PC-9 (cell line): ENCODE measurements at regions of chr9 and their contacts with region 1.

Region 1: DNA sequence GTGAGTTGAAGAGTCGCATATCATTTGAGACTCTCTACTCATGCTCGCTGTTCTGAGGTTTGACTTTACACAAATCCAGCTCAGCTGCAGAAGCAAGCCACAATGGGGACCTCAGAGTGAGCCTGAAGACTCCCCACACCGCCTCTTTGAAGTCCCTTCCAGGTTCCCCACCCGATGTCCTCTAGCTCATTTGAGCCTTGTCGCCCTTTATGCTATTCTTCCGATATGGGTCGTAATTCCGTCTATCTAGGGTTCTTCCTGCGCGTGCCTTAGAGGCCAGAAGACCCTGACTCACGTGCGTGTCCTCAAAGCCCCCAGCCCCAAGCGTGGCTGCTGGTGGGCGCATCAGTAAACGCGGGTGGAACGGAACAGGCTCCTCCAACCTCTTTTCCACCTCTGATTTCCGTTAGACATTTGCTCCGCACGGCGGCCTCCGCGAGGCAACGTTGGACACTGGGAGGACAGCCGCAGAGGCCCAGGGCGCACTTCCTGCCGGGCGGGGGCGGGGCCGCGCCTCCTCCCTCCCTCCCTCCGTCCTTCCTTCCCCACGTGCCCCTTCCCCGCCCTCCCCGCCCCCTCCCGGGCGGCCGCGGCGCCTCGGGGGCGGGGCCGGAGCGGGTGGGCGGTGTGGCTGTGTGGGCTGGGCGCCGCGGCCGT is at the start of gene SNX30:
- DNase-seq: peak; percentile 69 to 95
- H3K4me3 ChIP-seq: peak within 1 kb of the TSS; percentile 98
- H3K27ac ChIP-seq: peak within 1 kb of the TSS; percentile 47
- H3K4me1 ChIP-seq: peaks cover 47% of the 10 kb centered on the region
- H3K27me3 ChIP-seq: no peaks in the 10 kb centered on the region
- CTCF ChIP-seq: no peak
- total RNA-seq, gene SNX30: 32.5 and 33.1 TPM in 2 replicates

Region 2: DNA sequence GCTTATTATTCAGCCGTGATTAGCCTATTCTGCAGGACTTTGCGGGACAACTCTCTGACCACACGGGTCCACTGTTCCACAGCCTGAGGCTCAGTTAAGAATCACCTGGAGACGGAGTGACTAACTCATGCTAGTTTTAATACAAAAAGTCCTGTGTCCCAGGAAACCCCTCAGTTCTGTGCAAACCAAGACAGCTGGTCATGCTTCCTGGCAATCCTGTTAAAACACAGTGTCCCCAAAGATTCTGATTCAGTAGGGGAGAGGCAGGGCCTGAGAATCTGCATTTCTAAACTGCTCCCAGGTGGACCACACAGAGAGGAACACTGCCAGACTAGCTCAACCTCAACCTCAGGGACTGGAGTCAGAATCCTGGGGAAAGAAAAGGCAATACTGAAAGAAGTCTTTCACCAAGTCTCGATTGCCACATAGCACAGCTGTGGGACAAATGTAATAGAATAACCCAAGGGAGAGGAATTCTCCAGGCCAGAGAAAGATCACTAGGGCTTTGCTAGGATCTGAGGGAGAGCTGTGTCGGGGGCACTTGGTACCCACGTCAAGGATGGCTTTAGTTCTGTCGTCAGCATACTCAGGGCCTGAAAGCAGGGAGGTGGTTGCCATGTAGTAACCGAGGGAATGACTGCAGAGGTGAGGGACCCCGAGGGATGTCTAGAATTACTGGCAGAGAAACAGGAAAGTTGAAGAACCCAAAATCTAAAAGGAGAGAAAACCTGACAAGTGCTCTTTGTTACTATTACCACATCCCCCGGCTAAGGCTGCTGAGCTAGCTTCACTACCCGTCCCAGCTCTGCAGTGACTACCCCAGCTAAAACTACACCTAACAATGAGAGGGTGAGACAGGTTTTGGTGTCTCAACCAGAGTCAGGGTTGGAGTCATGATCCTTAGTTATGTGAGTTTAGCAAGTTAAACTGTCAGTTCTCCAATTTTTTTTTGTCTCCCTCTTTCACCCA is 583.8 kb before region 1 on chr9:
- CTCF ChIA-PET with region 1: no interaction called
- POLR2A ChIA-PET with region 1: no interaction called
- intact Hi-C with region 1: loop called (anchors 1 kb)
- DNase-seq: peak; percentile 61 to 83
- H3K4me3 ChIP-seq: no peak overlapping the region
- H3K27ac ChIP-seq: peak overlapping the region; percentile 70
- H3K4me1 ChIP-seq: peaks cover 60% of the 10 kb centered on the region
- H3K27me3 ChIP-seq: no peaks in the 10 kb centered on the region
- CTCF ChIP-seq: no peak; the same call in 1 of the 2 replicates

Region 3: DNA sequence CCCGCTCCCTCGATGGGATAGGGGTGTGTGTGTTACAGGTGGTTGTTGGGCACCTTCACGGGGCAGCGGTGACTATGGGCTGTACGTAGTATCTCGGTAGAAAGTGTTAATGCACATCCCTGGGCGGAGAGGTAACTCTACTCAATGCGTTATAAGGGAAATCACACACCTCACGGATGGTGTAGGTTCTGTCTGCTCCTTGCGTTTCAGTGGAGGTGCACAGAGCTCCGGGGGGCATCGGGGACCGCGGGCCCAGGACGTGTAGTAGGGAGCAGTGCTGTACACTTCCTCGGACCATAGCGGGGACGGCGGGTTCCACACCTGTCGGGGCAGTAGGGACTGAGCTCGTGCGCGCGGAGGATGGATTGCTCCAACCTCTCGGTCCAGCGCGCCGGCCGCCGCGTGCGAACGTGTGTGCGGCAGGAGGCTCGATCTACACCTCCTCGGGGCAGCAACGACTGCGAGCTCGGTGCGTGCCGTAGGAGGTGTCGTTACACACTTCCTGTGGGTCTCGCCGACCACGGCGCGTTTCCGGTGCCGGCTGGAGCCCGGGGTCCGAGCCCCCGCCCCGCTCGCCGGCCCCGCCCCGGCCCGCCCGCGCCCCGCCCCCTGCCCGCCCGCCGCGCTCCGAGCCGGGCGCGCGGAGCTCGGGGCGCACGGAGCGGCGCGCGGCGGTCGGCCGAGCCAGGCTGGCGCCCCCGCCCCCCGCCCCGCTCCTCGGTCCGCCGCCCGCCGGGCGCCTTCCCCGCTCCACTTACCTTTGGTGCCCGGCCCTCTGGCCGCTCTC is 263.8 kb before region 1 on chr9 and contains the start of gene KIAA1958:
- CTCF ChIA-PET with region 1: no interaction called
- POLR2A ChIA-PET with region 1: interaction called, 6 read pairs
- intact Hi-C with region 1: loop called (anchors 2 kb)
- DNase-seq: peak; percentile 71 to 89
- H3K4me3 ChIP-seq: peak within 1 kb of the TSS; percentile 81
- H3K27ac ChIP-seq: 0 out of 2 replicates have a peak within 1 kb of the TSS, but pooled peaks have one; percentile 17
- H3K4me1 ChIP-seq: peaks cover 21% of the 10 kb centered on the region
- H3K27me3 ChIP-seq: no peaks in the 10 kb centered on the region
- CTCF ChIP-seq: no peak
- total RNA-seq, gene KIAA1958: 19.5 and 19.8 TPM in 2 replicates

Region 4: DNA sequence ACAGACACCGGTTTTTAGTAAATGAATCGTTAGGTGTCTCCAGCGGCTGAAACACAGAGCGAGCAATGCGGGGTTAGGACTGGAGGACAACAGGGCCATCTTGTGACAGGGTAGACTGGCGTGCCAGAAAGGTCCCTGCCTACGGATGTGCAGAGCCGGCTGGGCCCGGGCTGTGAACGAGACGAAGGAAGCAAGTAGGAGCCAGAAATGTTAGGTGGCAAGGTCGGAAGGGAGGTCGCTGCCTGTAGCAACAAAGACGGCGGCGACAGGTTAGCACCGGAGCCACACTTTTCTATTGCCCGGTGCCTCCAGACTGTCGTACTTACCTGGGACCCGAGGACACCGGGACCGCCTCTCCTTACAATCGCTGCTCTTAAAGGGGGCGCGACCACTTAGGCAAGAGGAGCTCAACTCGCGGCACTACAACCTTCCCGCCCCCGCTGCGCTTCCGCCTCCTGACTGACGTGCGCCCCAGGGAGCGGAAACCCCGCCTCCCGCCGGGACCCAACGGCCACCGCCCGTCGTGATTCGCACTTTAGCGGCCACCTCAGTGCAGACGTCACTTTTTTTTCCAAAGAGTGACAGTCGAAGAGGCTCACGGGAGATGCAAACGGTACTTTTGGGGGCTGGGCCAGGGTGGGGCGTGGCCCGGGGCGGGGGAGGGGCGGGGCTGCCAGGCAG is 32.4 kb before region 1 on chr9 and contains the start of gene INIP:
- CTCF ChIA-PET with region 1: no interaction called
- POLR2A ChIA-PET with region 1: interaction called, 3 read pairs
- intact Hi-C with region 1: loop called (anchors 2 kb)
- DNase-seq: peak; percentile 93 to 99
- H3K4me3 ChIP-seq: peak within 1 kb of the TSS; percentile 77
- H3K27ac ChIP-seq: peak within 1 kb of the TSS; percentile 48
- H3K4me1 ChIP-seq: peaks cover 16% of the 10 kb centered on the region; the same call in 1 of the 2 replicates
- H3K27me3 ChIP-seq: no peaks in the 10 kb centered on the region
- CTCF ChIP-seq: no peak; the same call in 1 of the 2 replicates
- total RNA-seq, gene INIP: 24.0 and 28.0 TPM in 2 replicates

Region 5: DNA sequence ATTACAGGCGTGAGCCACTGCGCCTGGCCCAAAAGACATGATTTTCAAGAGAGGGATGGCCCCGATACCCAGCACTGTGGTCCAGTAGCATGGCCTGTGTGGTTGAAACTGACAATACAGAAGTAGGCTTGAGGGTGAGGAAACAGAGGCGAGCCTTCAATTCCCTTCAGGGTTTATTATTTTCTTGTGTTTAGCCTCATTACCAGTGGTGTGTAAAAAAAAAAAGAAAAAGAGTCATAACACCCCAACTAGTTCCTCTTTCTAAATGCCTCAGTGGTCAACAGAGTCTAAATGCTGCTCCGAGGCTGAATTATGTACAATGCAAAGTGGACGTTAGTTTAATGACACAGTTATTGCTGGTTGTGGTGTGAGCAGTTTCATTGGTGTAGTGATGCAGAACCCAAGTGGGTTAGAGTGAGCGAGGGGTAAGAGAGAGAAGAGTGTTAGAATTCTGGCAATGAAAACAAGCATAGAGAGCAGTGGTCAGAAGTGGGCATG is 59.2 kb after region 1 on chr9:
- CTCF ChIA-PET with region 1: interaction called, 10 read pairs
- POLR2A ChIA-PET with region 1: no interaction called
- intact Hi-C with region 1: no loop called
- DNase-seq: no peak
- H3K4me3 ChIP-seq: no peak overlapping the region
- H3K27ac ChIP-seq: no peak overlapping the region
- H3K4me1 ChIP-seq: no peaks in the 10 kb centered on the region
- H3K27me3 ChIP-seq: no peaks in the 10 kb centered on the region
- CTCF ChIP-seq: no peak

Region 6: DNA sequence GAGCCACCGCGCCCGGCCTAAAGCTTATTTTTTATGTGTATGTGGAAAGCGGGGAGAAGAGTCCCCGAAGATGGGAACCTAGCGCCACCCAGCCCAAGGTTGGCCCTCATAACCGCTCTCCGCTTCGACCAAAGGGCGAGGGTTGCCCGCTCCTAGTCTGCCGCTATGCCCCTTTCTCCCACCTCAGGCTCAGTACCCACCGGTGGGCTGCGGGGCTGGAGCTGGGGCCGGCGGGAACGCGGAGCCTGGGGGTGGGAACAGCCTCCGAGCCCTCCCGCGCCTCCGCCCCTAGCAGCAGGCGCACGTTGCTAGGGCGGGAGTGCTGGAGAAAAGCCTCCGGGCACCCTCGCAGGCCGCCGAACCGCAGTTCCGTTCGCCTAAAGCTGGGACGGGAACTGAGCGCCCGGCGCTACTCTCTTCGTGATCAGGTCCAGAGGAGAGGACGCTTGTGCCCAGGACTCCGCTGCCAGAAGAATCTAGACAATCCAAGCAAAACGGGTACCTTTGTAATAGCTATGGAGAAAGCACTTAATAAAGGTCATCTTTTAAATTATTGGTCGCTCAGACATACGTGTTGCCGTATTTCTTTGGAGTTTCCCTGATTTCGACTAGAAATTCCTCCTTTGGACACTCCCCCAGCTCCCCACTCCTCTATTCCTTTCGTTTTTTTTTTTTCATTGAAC is 589.9 kb after region 1 on chr9 and contains the start of gene WDR31:
- CTCF ChIA-PET with region 1: no interaction called
- POLR2A ChIA-PET with region 1: no interaction called
- intact Hi-C with region 1: loop called (anchors 10 kb)
- DNase-seq: peak; percentile 68 to 93
- H3K4me3 ChIP-seq: peak within 1 kb of the TSS; percentile 80
- H3K27ac ChIP-seq: peak within 1 kb of the TSS; percentile 81
- H3K4me1 ChIP-seq: peaks cover 43% of the 10 kb centered on the region
- H3K27me3 ChIP-seq: no peaks in the 10 kb centered on the region
- CTCF ChIP-seq: no peak
- total RNA-seq, gene WDR31: 11.2 and 12.9 TPM in 2 replicates